ENCODE measurements at regions of chr3 and their contacts with region 1.

Region 1: DNA sequence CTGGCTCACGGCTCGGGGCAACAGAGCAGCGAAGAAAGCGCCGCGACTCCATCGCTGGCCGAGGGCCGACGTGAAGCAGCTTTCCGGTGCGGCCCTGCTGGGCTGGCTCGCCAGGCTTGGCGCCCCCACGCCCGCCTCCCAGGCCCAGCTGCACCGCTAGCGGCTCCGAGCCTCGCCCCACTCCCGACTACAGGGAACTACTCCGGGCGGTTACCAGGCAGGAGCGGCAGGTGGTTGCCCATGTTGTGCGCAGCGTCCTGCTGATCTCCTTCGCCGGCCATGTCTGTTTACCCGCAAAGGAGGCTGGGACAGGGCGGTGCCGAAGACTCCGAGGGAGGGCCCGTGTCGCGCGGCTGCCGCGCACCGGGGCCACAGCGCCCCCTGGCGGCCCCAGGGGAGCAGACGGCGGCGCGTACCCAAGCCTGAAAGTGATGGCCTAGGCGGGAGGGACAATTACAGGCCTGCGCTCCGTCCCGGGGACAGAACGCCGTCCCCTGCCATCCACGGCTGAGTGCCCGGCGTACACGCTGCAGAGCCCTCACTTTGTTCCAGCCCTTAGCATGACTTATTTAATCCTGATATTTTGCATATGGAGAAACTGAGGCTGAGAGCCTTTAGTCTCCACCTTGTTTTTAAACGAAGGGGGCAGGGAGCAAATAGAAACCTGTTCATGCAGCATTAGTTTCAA is at the start of gene CRBN:
- DNase-seq: peak; percentile 94 to 96 (median 96)
- ATAC-seq: peak; percentile 99
- H3K4me3 ChIP-seq: peak within 1 kb of the TSS; percentile 80
- H3K27ac ChIP-seq: peak within 1 kb of the TSS; percentile 79
- H3K4me1 ChIP-seq: peaks cover 4 to 18% of the 10 kb centered on the region in 2 experiments; a peak in 3 of 5 replicates
- H3K27me3 ChIP-seq: no peaks in the 10 kb centered on the region; a peak in 1 of 5 replicates
- CTCF ChIP-seq: peak; percentile 94 to 99 (median 97)
- EP300 ChIP-seq: peak; percentile 27; the same call in 1 of the 2 replicates
- POLR2A ChIP-seq: peak; percentile 94
- RAD21 ChIP-seq: peak; percentile 78 to 79
- polyA plus RNA-seq, gene CRBN: 271 to 331 TPM

Region 2: GRCh38 chr3:2958551-2958950 is 221.0 kb before region 1 on chr3:
- CTCF ChIA-PET with region 1: no interaction called
- POLR2A ChIA-PET with region 1: no interaction called
- in situ Hi-C with region 1: no loop called
- intact Hi-C with region 1: no loop called
- DNase-seq: no peak
- ATAC-seq: no peak
- H3K4me3 ChIP-seq: no peak overlapping the region
- H3K27ac ChIP-seq: no peak overlapping the region
- H3K4me1 ChIP-seq: no peaks in the 10 kb centered on the region
- H3K27me3 ChIP-seq: no peaks in the 10 kb centered on the region
- CTCF ChIP-seq: no peak
- EP300 ChIP-seq: no peak
- POLR2A ChIP-seq: no peak
- RAD21 ChIP-seq: no peak

Region 3: DNA sequence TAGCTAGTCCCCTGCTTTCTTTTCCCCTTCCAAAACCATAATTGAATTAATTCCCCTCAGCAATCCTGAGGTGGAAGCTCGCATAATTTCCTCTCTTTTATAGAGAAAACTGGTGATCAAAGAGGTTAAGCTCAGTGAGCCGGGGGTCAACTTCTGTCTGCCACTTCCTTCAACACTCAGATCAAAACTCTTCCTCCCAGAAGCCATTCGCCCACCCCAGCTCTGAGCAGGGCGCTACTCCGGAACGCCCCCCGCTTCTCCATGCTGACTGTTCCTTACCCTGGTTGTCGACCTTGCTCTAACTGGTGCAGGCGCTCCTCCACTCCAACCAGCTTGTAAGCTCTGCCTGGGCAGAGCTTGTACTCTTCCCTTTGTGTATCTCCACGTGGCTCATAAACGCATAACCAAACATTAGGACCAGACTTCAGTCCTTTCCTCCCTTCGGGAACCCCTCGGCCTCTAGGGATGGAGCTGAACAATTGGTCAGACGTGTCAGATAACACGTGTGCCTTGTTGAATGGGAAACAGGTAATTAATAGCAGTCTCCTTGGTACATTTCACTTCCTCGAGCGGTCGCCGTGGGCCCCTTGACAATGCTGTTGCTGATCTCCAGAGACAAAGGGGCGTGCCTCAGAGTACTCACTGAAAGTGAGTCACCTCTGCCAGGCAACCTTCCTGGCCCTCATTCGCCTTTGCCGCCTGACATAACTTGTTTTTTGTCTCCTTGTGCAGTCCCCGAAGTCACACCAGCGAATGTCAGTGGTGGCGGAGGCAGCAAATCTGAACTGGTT is 141.2 kb before region 1 on chr3:
- CTCF ChIA-PET with region 1: no interaction called
- POLR2A ChIA-PET with region 1: no interaction called
- in situ Hi-C with region 1: no loop called
- intact Hi-C with region 1: loop called (anchors 10 kb)
- DNase-seq: no peak
- ATAC-seq: peak; percentile 48
- H3K4me3 ChIP-seq: no peak overlapping the region
- H3K27ac ChIP-seq: no peak overlapping the region
- H3K4me1 ChIP-seq: no peaks in the 10 kb centered on the region
- H3K27me3 ChIP-seq: peaks cover 10 to 14% of the 10 kb centered on the region in 2 experiments
- CTCF ChIP-seq: no peak
- EP300 ChIP-seq: no peak
- POLR2A ChIP-seq: no peak
- RAD21 ChIP-seq: no peak

Measured in K562 (cell line).